ENCODE measurements at regions of chr9 and their contacts with region 1.

Region 1: DNA sequence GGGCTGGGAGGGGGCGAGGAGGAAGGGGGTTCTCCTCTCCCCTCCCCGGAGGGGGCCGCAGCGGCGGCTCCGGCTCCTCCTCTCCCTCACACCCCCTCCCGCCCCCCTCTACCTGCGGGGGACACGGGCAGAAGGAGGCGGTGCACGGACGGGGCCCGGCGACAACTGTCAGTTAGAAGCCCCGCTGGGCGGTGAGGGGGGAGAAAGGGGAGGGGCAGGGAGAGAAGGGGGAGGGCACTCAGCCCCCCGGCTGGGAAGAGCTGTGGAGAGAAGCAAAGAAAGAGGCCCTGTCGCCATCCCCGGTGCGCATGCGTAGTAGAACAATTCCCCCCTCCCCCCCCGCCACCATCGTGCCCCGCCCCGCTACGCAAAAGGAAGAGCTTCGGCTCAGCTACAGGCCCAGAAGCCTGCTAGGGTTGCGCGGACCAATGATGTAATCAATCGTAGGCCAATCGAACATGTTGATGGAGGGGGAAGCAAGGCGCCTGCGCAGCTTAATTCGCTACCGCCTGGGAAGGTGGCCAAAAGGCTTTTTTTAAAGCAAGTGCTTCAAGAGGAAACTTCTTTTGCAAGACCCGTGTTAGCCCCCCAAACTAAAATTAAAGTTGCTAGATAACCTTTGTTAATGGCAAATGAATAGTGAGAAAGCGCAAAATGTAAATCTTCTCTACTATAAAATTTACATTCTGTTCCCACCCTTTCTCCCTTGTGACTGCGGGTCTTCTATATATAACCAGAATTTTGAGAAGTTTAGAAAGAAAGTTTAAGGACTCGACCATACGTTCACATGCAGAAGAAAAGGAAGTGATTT is 7.0 kb downstream of the RANBP6 start:
- DNase-seq: peak; percentile 96 to 97
- ATAC-seq: peak; percentile 96
- H3K4me3 ChIP-seq: peak overlapping the region; percentile 90 to 95
- H3K27ac ChIP-seq: peak overlapping the region; percentile 55 to 98
- H3K4me1 ChIP-seq: peaks cover 0 to 2% of the 10 kb centered on the region in 2 donors
- H3K27me3 ChIP-seq: no peaks in the 10 kb centered on the region

Region 2: GRCh38 chr9:5510360-5510931 is 497.9 kb before region 1 on chr9 and contains the start of gene PDCD1LG2:
- intact Hi-C with region 1: no loop called
- DNase-seq: no peak
- ATAC-seq: peak; percentile 75
- H3K4me3 ChIP-seq: peak within 1 kb of the TSS; percentile 40 to 43
- H3K27ac ChIP-seq: peak within 1 kb of the TSS; percentile 67 to 76
- H3K4me1 ChIP-seq: peaks cover 0 to 5% of the 10 kb centered on the region in 2 donors
- H3K27me3 ChIP-seq: no peaks in the 10 kb centered on the region
- total RNA-seq, gene PDCD1LG2: 5.3 to 5.4 TPM

Region 3: DNA sequence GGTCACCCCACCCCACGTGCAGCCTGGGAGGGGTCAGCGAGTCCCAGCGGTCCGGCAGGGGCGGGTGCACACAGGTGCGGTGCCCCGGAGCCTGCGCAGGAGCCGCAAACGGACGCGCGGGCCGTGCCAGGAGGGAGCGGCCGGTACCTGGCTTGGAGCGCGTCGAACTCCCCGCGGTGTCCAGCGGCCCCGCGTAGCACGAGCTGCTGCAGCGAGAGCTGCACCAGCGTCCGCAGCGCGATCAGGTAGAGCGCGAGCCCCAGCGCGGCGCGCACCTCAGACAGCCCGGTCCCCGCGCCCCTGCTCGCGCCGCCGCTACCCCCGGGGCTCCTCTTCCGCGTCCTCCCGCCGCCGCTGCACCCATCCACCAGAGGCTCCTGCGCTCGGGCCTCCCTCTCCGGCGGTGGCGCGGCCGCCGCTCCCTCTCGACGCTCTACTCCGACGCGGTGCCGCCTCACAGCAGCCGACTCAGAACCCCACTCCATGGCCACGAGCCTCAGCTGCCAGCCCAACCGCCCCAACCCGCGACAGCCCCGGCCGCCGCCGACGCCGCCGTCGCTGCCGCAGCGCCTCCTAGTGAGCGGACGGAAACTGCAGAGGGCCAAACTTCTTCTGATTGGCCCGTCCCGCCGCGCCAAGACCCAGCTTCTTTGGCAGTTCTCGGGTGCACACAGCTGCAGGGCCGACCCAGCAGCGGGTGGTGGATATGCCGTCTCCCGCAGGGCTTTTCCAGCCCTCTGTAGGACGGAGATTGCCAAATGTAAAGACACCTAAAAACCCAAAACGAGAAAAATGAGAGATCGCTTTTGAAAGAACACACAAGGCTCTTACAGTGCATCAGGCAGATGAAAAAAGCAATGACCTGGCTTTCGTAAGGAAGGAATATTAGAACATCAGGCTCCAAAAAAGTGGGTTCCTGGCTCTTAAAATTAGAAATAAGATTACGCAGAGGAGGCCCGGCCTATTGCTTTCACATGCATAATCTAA is 175.5 kb before region 1 on chr9 and contains the start of gene ERMP1:
- intact Hi-C with region 1: loop called in 1 of 2 experiments (anchors 5 kb)
- DNase-seq: peak; percentile 92 to 97
- ATAC-seq: peak; percentile 95
- H3K4me3 ChIP-seq: peak within 1 kb of the TSS; percentile 5 to 73
- H3K27ac ChIP-seq: peak within 1 kb of the TSS in 1 of 2 donors; percentile 0
- H3K4me1 ChIP-seq: peaks cover 0 to 2% of the 10 kb centered on the region in 2 donors
- H3K27me3 ChIP-seq: no peaks in the 10 kb centered on the region
- total RNA-seq, gene ERMP1: 7.1 to 11.2 TPM

Region 4: DNA sequence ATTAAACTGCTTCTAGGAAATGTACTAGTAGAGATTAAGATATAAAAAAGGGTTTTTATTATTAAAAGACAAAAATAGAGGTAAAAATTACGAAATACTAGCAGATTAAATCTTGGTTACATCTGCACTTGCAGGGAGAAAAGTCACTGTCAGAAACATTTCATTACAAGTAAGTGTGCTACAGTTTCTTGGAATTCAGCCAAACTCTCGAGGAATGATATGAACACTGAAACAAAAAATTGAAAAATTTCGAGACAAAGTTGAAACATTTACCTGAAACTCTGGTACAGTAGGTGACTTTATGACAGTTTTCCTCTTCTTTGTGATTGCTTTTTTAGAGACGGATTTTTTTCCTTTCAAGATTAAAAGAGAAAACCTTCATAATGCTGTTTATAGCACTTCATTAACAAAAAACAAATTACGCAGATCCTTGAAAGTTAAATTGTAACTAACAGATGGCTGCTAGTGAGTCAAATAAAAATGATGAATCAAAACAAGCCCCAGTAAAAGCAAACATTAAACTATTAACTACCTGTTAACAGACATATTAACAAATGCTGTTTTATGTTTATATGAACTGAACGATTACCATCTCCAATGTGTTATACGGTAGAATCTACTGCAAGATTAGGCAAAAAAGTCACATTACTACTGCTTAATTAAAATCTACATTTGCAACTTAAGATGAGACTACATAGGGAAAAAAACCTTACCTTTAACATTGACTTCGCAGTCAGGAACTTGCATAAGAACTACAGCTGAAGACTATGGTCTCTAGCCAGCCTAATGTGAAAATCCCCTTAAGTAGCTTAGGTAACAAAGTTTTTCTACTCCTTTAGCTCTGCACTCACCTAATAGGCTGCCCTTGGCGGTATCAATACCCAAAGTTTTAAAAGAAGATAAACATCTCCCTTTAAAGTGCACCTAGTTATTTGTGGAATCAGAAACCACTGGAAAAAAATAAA is 54.3 kb before region 1 on chr9:
- intact Hi-C with region 1: loop called in 1 of 2 experiments (anchors 10 kb)
- DNase-seq: no peak
- ATAC-seq: no peak
- H3K4me3 ChIP-seq: no peak overlapping the region
- H3K27ac ChIP-seq: no peak overlapping the region
- H3K4me1 ChIP-seq: peaks cover 0 to 2% of the 10 kb centered on the region in 2 donors
- H3K27me3 ChIP-seq: no peaks in the 10 kb centered on the region

Measured in aorta (tissue), 5 donors.